WTC11 (cell line): ENCODE measurements at regions of chr1 and their contacts with region 1.

Region 1: GRCh38 chr1:74733604-74734484 is 892 bp downstream of the TYW3 start:
- DNase-seq: no peak
- ATAC-seq: peak; percentile 54
- H3K4me3 Mint-ChIP-seq: peak overlapping the region; percentile 92
- H3K27ac Mint-ChIP-seq: peak overlapping the region; percentile 100
- H3K4me1 Mint-ChIP-seq: peaks cover 34% of the 10 kb centered on the region
- H3K27me3 Mint-ChIP-seq: no peaks in the 10 kb centered on the region
- CTCF ChIP-seq: no peak; the same call in 1 of the 2 replicates

Region 2: GRCh38 chr1:74767490-74767889 is 33.6 kb after region 1 on chr1:
- CTCF ChIA-PET with region 1: interaction called, 13 read pairs
- POLR2A ChIA-PET with region 1: no interaction called
- DNase-seq: peak; percentile 54
- ATAC-seq: peak; percentile 95
- H3K4me3 Mint-ChIP-seq: no peak overlapping the region
- H3K27ac Mint-ChIP-seq: no peak overlapping the region
- H3K4me1 Mint-ChIP-seq: no peaks in the 10 kb centered on the region
- H3K27me3 Mint-ChIP-seq: no peaks in the 10 kb centered on the region
- CTCF ChIP-seq: peak; percentile 42; the same call in 1 of the 2 replicates